ENCODE measurements at regions of chr6 and their contacts with region 1.

Region 1: DNA sequence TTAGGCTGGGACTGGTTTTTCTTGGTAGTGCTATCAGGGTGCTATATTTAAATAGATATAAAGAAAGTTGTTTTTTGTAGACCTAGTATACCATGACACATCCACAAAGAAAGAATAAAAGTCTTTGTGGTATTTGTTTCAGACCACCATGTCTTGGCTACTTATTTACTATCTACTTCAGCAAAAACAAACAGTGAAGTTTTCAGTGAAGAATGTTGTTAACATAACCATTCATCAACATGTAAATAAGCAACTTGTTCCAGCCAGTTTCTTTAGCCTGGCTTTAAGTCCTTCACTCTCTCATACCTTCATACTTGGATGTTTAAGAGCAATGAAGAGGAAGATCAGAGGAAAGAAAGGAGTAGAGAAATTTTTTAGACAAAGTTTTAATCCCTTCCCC is 624.1 kb downstream of the CD109 start:
- DNase-seq: no peak
- H3K4me3 ChIP-seq: no peak overlapping the region
- H3K27ac ChIP-seq: no peak overlapping the region
- H3K4me1 ChIP-seq: no peaks in the 10 kb centered on the region
- H3K27me3 ChIP-seq: no peaks in the 10 kb centered on the region
- CTCF ChIP-seq: no peak
- EP300 ChIP-seq: no peak
- POLR2A ChIP-seq: no peak

Region 2: DNA sequence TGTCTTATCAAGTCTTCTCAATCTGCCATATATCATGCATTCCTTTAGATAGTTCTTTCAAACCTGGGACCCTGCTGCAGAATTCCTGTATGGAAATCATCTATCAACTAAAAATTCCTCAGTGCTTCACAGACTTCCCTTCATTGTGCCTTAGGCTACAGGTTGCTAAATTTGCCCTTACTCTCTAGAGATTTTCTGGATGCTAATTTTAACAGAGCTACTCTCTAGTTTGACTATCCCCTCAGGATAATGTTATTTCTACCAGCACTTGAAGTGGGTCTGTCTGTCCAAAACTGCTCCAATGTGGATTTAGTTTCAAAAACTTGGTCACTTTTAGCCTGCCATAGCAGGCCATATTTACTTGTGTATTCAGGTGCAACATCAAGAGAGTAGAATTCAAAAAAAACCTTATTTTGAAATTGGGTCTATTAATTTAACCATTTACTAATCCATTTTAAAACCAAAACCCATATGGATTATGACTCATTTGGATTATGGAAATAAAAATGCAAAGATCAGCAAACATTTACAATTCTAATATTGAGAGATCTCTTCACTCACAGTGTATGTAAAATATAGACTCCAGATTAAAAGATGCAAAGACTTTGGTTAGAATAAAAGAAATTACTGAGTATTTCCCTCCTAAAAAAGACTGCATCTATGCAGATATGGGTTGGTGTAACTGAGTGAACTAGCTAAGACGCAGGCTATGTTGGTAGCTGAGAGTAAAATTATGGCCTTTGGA is 937.4 kb after region 1 on chr6:
- in situ Hi-C with region 1: no loop called
- intact Hi-C with region 1: loop called (anchors 5 kb)
- DNase-seq: no peak
- H3K4me3 ChIP-seq: no peak overlapping the region
- H3K27ac ChIP-seq: no peak overlapping the region
- H3K4me1 ChIP-seq: no peaks in the 10 kb centered on the region
- H3K27me3 ChIP-seq: no peaks in the 10 kb centered on the region
- CTCF ChIP-seq: no peak
- EP300 ChIP-seq: no peak
- POLR2A ChIP-seq: no peak

Measured in transverse colon (tissue), 4 donors.